IMR-90 (cell line): ENCODE measurements at regions of chr2 and their contacts with region 1.

Region 1: GRCh38 chr2:25041928-25042320 is at the start of gene EFR3B:
- DNase-seq: peak; percentile 90
- ATAC-seq: peak; percentile 99
- H3K4me3 ChIP-seq: peak within 1 kb of the TSS; percentile 51
- H3K27ac ChIP-seq: no peak within 1 kb of the TSS
- H3K4me1 ChIP-seq: peaks cover 10% of the 10 kb centered on the region
- H3K27me3 ChIP-seq: peaks cover 16% of the 10 kb centered on the region
- CTCF ChIP-seq: no peak
- POLR2A ChIP-seq: peak; percentile 40; the same call in 1 of the 2 replicates
- RAD21 ChIP-seq: no peak
- total RNA-seq, gene EFR3B: 0.90 and 1.1 TPM in 2 replicates

Region 2: GRCh38 chr2:24971536-24972314 is 70.2 kb before region 1 on chr2 and contains the start of gene DNAJC27:
- CTCF ChIA-PET with region 1: no interaction called
- POLR2A ChIA-PET with region 1: no interaction called
- dilution Hi-C with region 1: no loop called
- in situ Hi-C with region 1: no loop called
- intact Hi-C with region 1: loop called (anchors 5 kb)
- DNase-seq: peak; percentile 98
- ATAC-seq: peak; percentile 97
- H3K4me3 ChIP-seq: peak within 1 kb of the TSS; percentile 72
- H3K27ac ChIP-seq: peak within 1 kb of the TSS; percentile 96
- H3K4me1 ChIP-seq: no peaks in the 10 kb centered on the region
- H3K27me3 ChIP-seq: no peaks in the 10 kb centered on the region
- CTCF ChIP-seq: no peak
- POLR2A ChIP-seq: peak; percentile 97
- RAD21 ChIP-seq: no peak
- total RNA-seq, gene DNAJC27: 2.0 and 2.8 TPM in 2 replicates

Region 3: DNA sequence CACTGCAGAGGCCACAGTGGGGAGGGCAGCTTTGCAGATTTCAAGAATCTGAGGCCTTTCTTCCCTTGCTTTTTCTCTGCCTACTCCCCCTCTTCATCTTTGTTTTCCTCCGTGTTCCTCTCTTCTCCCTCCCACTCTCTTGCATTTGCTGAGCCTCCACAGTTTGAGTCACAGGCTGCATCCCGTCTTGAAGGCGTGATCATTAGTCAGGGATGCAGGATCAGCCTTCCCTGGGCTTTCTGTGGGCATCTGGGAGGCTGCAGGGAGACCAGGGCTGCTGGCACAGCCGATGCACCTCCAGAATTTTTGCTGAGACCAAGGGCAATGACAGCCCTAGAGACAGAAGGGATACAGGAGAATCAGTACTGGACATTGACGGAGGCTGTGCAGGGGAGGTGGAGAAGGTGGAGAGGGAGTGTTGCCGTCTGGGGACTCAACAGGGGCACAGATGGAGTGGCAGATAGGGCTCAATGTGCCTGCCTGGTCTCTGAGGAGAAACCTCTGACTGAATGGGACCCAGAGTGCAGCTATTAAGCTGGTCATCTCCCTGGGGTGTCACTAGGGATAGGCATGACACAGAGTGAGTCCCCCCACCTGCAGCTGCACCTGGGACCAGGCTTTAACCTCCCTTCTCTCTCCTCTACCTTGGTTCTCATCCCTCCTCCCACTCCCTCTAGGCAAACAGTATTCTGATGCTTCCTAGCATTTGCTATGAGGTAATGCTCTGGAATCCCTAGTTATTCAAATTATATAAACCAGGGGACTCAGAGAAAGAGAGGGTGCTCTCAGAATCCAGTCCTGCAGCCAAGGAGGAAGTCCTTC is 41.2 kb before region 1 on chr2:
- CTCF ChIA-PET with region 1: no interaction called
- POLR2A ChIA-PET with region 1: interaction called, 3 read pairs
- dilution Hi-C with region 1: no loop called
- in situ Hi-C with region 1: no loop called
- intact Hi-C with region 1: loop called (anchors 5 kb)
- DNase-seq: peak; percentile 68
- ATAC-seq: peak; percentile 73
- H3K4me3 ChIP-seq: no peak overlapping the region
- H3K27ac ChIP-seq: no peak overlapping the region
- H3K4me1 ChIP-seq: peaks cover 13% of the 10 kb centered on the region
- H3K27me3 ChIP-seq: no peaks in the 10 kb centered on the region
- CTCF ChIP-seq: no peak
- POLR2A ChIP-seq: no peak
- RAD21 ChIP-seq: no peak

Region 4: DNA sequence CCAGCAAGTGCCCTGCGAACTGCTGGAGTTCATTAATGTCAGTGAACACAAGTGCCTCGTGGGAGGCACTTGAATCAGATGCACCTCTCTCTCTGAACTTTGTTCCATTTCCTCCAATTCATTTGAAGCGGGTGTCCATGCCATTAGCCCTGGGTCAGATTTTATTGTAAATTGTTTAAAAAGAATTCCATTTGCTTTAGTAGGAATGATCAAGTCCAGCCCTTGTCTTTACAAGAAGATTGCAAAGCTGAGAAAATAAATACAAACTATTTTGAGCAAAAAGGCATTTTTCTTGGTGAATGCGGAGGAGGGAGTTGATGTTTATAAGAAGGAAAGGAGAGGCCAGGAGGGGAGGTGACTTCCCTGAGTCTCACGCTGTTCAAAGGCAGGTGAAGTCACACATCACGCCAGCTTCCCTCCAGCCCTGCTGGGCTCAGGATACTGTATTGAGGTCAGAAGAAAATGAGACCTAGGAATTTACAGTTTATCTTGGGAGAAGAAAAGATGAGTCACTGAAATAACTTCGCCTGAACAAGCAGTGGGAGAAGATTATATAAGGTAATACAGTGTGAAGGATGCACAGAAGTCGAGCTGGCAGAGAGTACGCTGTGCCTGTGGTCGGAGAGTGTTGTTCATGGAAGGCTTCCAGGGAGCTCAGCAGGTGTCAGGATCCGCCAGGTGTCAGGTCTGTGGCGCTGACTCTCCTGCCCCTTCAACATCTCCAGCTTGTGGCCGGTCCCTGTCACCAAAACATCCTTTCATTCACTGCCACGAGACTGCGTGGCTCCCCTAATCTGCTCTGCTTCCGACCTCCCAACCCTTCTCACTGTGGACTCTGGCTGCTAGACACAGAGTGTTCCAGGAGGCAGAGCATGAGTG is 36.5 kb after region 1 on chr2:
- CTCF ChIA-PET with region 1: no interaction called
- POLR2A ChIA-PET with region 1: no interaction called
- dilution Hi-C with region 1: no loop called
- in situ Hi-C with region 1: no loop called
- intact Hi-C with region 1: loop called (anchors 5 kb)
- DNase-seq: peak; percentile 91
- ATAC-seq: peak; percentile 92
- H3K4me3 ChIP-seq: no peak overlapping the region
- H3K27ac ChIP-seq: no peak overlapping the region; the same call in 1 of the 2 replicates
- H3K4me1 ChIP-seq: peaks cover 5% of the 10 kb centered on the region
- H3K27me3 ChIP-seq: peaks cover 41% of the 10 kb centered on the region
- CTCF ChIP-seq: no peak
- POLR2A ChIP-seq: no peak
- RAD21 ChIP-seq: peak; percentile 2; the same call in 1 of the 2 replicates

Region 5: GRCh38 chr2:25331686-25332365 is 289.9 kb after region 1 on chr2:
- CTCF ChIA-PET with region 1: no interaction called
- POLR2A ChIA-PET with region 1: no interaction called
- dilution Hi-C with region 1: no loop called
- in situ Hi-C with region 1: no loop called
- intact Hi-C with region 1: no loop called
- DNase-seq: peak; percentile 34
- ATAC-seq: 0 out of 2 replicates have a peak, but pooled peaks have one; percentile 24
- H3K4me3 ChIP-seq: no peak overlapping the region
- H3K27ac ChIP-seq: no peak overlapping the region
- H3K4me1 ChIP-seq: no peaks in the 10 kb centered on the region; the same call in 1 of the 2 replicates
- H3K27me3 ChIP-seq: no peaks in the 10 kb centered on the region
- CTCF ChIP-seq: no peak
- POLR2A ChIP-seq: no peak
- RAD21 ChIP-seq: no peak